ENCODE measurements at regions of chr4 and their contacts with region 1.

Region 1: DNA sequence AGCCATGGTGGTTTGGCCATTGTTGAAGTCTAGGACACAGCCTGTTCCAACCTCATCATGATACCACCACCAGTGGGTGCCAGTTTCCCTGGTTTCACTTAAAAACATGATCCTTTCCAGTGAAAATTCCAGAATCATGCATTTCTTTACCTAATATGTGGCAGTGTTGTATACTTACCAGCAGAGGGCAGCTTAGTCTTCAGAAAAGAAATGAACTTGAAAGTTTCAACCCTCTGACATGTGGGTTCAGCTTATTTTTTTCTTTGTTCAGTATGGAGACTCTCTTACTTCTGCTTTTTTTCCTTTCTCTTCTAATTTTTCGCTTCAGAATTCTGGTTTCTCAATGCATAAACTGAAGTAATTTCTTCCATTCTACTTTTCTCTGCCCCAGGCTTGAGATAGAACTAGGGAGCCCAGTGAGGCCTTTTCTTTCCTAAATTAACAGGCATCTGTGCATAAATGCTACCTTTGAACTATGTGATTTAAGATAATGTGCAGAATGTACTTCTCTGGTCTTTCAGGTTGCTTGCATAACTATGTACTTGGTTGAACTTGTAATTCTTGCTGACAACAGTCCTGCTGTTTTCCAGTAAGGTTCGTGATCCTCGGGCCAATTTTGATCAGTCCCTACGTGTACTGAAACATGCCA is 10.7 kb downstream of the LIAS start:
- DNase-seq: peak; percentile 92
- H3K4me3 ChIP-seq: no peak overlapping the region
- H3K27ac ChIP-seq: peak overlapping the region; percentile 26
- H3K4me1 ChIP-seq: peaks cover 3% of the 10 kb centered on the region
- H3K27me3 ChIP-seq: no peaks in the 10 kb centered on the region
- CTCF ChIP-seq: peak; percentile 77 to 84
- POLR2A ChIP-seq: no peak

Region 2: GRCh38 chr4:39446751-39447573 is 22.6 kb before region 1 on chr4:
- CTCF ChIA-PET with region 1: interaction called, 11 read pairs
- POLR2A ChIA-PET with region 1: no interaction called
- dilution Hi-C with region 1: no loop called
- intact Hi-C with region 1: no loop called
- DNase-seq: peak; percentile 69
- H3K4me3 ChIP-seq: peak overlapping the region in 2 of 3 experiments; percentile 26 to 33
- H3K27ac ChIP-seq: no peak overlapping the region
- H3K4me1 ChIP-seq: peaks cover 7% of the 10 kb centered on the region
- H3K27me3 ChIP-seq: no peaks in the 10 kb centered on the region
- CTCF ChIP-seq: peak; percentile 48 to 62
- POLR2A ChIP-seq: no peak

Region 3: GRCh38 chr4:39480902-39481695 is 11.5 kb after region 1 on chr4:
- CTCF ChIA-PET with region 1: interaction called, 14 read pairs
- POLR2A ChIA-PET with region 1: no interaction called
- dilution Hi-C with region 1: no loop called
- intact Hi-C with region 1: no loop called
- DNase-seq: no peak
- H3K4me3 ChIP-seq: no peak overlapping the region
- H3K27ac ChIP-seq: no peak overlapping the region
- H3K4me1 ChIP-seq: no peaks in the 10 kb centered on the region
- H3K27me3 ChIP-seq: no peaks in the 10 kb centered on the region
- CTCF ChIP-seq: no peak
- POLR2A ChIP-seq: no peak

Region 4: DNA sequence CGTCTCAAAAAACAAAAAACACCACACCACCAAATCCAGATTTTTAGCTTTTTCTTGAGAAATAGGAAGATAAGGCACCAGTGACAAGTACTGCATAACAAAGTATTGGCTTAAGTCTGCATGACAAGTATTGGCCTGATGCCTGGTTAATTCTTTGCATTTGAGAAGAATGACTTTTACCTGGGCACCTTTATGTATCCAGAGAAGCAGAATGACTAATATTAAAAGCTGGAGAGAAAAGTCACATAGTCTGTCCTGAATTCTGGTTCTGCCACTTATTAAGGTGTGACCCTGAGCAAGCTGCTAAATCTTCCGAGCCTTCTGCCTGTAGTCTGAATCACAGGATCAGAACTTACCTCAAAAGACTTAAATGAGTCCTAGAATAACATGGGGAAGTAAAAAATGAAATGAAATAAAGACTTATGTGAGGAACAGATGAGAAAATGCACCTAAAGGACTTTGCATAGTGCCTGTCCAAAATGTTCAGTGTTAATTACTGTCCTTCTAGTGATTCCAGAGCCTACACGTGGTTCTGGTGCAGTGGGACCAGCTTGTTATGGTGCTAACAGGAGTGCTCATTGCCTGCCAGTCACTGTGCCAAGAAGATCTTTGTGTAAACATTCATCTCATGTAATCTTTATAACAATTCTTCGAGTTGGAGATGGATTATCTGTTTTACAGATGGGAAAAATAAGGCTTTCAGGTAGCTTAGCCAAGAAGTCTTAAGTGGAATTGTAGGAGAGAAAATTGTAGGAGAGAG is 26.1 kb after region 1 on chr4:
- CTCF ChIA-PET with region 1: interaction called, 12 read pairs
- POLR2A ChIA-PET with region 1: no interaction called
- dilution Hi-C with region 1: no loop called
- intact Hi-C with region 1: no loop called
- DNase-seq: no peak
- H3K4me3 ChIP-seq: no peak overlapping the region
- H3K27ac ChIP-seq: no peak overlapping the region
- H3K4me1 ChIP-seq: no peaks in the 10 kb centered on the region
- H3K27me3 ChIP-seq: no peaks in the 10 kb centered on the region
- CTCF ChIP-seq: no peak
- POLR2A ChIP-seq: no peak

Region 5: GRCh38 chr4:39539089-39539700 is 69.6 kb after region 1 on chr4:
- CTCF ChIA-PET with region 1: no interaction called
- POLR2A ChIA-PET with region 1: no interaction called
- dilution Hi-C with region 1: no loop called
- intact Hi-C with region 1: no loop called
- DNase-seq: no peak
- H3K4me3 ChIP-seq: no peak overlapping the region
- H3K27ac ChIP-seq: no peak overlapping the region
- H3K4me1 ChIP-seq: no peaks in the 10 kb centered on the region
- H3K27me3 ChIP-seq: no peaks in the 10 kb centered on the region
- CTCF ChIP-seq: no peak
- POLR2A ChIP-seq: no peak

Region 6: GRCh38 chr4:39657465-39657864 is 187.9 kb after region 1 on chr4:
- CTCF ChIA-PET with region 1: interaction called, 97 read pairs
- POLR2A ChIA-PET with region 1: no interaction called
- dilution Hi-C with region 1: no loop called
- intact Hi-C with region 1: loop called (anchors 2 kb)
- DNase-seq: no peak
- H3K4me3 ChIP-seq: no peak overlapping the region
- H3K27ac ChIP-seq: no peak overlapping the region
- H3K4me1 ChIP-seq: no peaks in the 10 kb centered on the region
- H3K27me3 ChIP-seq: no peaks in the 10 kb centered on the region
- CTCF ChIP-seq: no peak
- POLR2A ChIP-seq: no peak

Region 7: DNA sequence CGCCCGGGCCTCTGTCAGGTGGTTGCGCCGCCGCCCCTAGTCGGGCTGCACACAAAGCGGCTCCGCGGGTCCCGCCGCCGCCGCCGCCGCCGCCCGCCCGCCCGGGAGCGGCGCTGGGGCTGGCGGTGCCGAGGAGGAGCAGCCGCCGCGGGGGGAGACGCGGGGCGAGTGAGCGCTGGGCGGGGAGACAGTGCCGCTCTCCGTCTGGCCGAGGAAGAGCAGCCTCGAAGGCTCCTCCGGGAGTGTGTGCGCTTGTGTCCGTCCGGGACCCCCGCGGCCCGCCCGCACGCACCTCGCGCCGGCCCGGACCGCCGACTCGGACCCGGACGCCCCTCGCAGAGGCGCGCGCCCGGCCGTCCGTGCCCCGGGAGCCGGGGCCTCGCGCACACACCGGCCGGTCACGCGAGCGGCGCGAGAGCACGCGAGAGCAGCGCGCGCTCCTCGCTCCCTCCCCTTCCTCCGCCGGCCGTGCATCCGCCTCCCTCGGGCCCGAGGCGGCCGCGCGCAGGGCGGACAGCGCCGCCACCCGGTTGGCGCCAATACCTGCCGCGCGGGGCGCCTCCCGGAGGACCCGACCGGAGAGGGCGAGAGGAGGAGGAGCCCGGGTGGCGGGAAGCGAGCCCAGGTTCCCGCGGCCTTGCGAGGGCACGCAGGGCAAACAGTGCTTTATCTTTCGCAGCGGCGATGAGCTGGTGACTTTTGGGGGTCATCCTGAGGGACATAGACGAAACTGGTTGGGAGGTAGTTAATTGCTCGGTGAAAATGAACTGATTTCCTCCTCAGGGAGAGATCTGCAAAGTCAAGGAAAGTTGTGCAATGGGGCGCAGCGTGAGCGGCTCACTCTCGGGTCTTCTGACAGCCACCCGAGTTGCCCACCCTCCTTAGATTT is 508.2 kb after region 1 on chr4 and contains the start of gene PDS5A:
- CTCF ChIA-PET with region 1: interaction called, 5 read pairs
- POLR2A ChIA-PET with region 1: no interaction called
- dilution Hi-C with region 1: no loop called
- intact Hi-C with region 1: loop called (anchors 1 kb)
- DNase-seq: peak; percentile 88
- H3K4me3 ChIP-seq: peak within 1 kb of the TSS; percentile 62 to 83 (median 67)
- H3K27ac ChIP-seq: peak within 1 kb of the TSS; percentile 74
- H3K4me1 ChIP-seq: peaks cover 15% of the 10 kb centered on the region
- H3K27me3 ChIP-seq: no peaks in the 10 kb centered on the region
- CTCF ChIP-seq: peak; percentile 77 to 95
- POLR2A ChIP-seq: peak; percentile 78
- total RNA-seq, gene PDS5A: 77.8 and 80.8 TPM in 2 replicates

Measured in endothelial cell of umbilical vein (primary cell).